GM12878 (cell line): ENCODE measurements at regions of chr21 and their contacts with region 1.

Region 1: GRCh38 chr21:14864211-14865021 is 200.4 kb downstream of the NRIP1 start:
- DNase-seq: no peak
- ATAC-seq: peak; percentile 95
- H3K4me3 ChIP-seq: no peak overlapping the region
- H3K27ac ChIP-seq: peak overlapping the region; percentile 40
- H3K4me1 ChIP-seq: peaks cover 13% of the 10 kb centered on the region
- H3K27me3 ChIP-seq: no peaks in the 10 kb centered on the region
- CTCF ChIP-seq: peak; percentile 87 to 89 (median 87)
- EP300 ChIP-seq: peak in 1 of 2 experiments; percentile 44; a peak in 1 of 4 replicates
- POLR2A ChIP-seq: no peak
- RAD21 ChIP-seq: peak; percentile 95

Region 2: DNA sequence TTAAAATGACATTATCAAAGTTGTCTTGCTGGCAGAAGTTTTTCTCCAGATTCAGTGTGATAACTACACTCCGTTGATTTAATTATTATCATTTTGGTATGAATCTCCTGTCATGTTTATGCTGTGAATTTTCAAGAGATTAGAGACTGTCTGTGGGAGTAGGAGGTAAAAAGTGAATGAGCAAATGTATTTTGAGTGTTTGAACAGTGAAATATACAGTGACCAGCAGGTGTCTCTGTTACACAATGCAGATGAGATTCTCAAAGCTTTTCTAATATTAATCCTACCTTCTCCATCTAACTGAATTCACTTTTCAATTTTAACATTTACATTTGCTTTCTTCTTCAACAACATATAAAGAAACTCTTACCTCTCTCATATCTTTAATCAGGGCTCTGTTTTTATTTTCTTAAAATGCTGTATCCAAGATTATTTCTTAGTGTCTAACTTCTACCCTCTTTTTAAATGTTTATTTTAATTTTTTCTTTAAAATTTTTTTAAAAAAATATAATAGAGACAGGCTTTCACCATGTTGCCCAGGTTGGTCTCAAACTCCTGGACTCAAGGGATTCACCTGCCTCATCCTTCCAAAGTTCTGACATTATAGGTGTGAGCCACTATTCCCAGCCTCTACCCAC is 460.6 kb before region 1 on chr21:
- CTCF ChIA-PET with region 1: interaction called, 4 read pairs
- POLR2A ChIA-PET with region 1: no interaction called
- RAD21 ChIA-PET with region 1: interaction called, 4 read pairs
- SMC1A ChIA-PET with region 1: interaction called, 6 read pairs
- in situ Hi-C with region 1: no loop called
- intact Hi-C with region 1: loop called (anchors 5 kb)
- DNase-seq: peak; percentile 9
- ATAC-seq: peak; percentile 78
- H3K4me3 ChIP-seq: no peak overlapping the region
- H3K27ac ChIP-seq: no peak overlapping the region
- H3K4me1 ChIP-seq: no peaks in the 10 kb centered on the region
- H3K27me3 ChIP-seq: no peaks in the 10 kb centered on the region
- CTCF ChIP-seq: peak; percentile 42 to 72 (median 60); a peak in 5 of 6 replicates
- EP300 ChIP-seq: no peak
- POLR2A ChIP-seq: no peak
- RAD21 ChIP-seq: peak; percentile 83

Region 3: DNA sequence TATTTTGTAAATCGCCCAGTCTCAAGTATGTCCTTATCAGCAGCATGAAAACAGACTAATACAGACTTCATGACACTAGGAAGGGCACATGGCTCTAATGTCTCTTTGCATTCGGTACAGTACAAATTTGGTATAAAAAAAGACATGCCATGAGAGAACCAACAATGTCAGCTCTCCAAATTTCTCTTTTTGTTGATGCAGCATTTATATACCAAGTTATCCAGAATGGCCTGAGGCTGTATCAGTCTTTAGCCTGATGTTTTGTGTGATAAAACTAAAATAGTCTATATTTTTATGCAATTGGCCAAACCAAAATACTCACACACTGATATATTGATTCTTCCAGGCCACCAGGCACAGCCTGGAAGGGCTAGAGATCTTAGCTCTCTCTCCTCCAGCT is 194.0 kb before region 1 on chr21:
- CTCF ChIA-PET with region 1: no interaction called
- POLR2A ChIA-PET with region 1: no interaction called
- RAD21 ChIA-PET with region 1: no interaction called
- SMC1A ChIA-PET with region 1: no interaction called
- in situ Hi-C with region 1: no loop called
- intact Hi-C with region 1: no loop called
- DNase-seq: no peak
- ATAC-seq: no peak
- H3K4me3 ChIP-seq: no peak overlapping the region
- H3K27ac ChIP-seq: no peak overlapping the region
- H3K4me1 ChIP-seq: peaks cover 2% of the 10 kb centered on the region
- H3K27me3 ChIP-seq: no peaks in the 10 kb centered on the region
- CTCF ChIP-seq: no peak
- EP300 ChIP-seq: no peak
- POLR2A ChIP-seq: no peak
- RAD21 ChIP-seq: no peak

Region 4: DNA sequence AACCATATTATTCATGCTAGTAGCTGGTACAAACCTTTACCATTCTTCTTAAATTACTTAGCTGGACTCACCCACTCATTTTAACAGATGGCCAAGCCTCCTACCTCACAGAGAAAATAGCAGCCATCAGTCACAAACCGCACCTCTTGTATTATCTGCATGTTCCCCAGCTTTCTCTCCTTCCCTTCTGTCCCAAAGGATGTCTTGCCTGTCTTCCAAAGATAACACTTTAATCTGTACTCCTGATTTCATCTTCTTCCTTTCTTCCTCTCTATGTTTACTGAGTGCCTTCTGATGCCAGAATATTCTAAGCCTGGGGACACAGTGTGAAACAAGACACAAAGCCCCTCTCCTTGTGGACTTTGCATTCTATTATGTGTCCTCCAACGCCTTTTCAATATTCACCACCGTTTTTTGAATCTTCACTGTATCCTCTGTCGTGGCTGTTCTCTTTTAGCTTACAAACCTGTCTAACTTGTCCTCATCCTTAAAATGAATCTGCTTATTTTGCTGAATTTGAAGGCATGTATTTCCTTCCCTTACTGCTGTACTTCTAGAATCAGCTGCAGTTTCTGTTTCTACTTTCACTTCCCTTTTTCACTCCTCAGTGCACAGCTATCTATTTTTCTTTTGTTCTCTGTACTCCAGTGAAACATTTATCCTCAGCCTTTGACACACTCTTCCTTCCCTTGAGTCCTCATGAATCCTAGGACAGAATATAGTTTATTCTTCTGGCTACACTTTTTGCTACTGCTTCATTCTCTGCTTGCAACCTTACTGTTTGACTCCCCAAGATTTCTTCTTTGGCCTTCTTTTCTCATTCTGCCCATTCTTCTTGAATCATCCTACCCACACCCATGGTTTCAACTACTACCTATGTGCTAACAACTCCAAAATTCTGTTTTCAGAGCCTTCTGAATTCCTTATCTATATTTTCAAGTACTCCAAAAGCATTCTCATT is 101.4 kb before region 1 on chr21:
- CTCF ChIA-PET with region 1: interaction called, 8 read pairs
- POLR2A ChIA-PET with region 1: no interaction called
- RAD21 ChIA-PET with region 1: interaction called, 5 read pairs
- SMC1A ChIA-PET with region 1: interaction called, 5 read pairs
- in situ Hi-C with region 1: no loop called
- intact Hi-C with region 1: loop called (anchors 5 kb)
- DNase-seq: peak; percentile 82
- ATAC-seq: peak; percentile 97
- H3K4me3 ChIP-seq: peak overlapping the region; percentile 59
- H3K27ac ChIP-seq: peak overlapping the region; percentile 87
- H3K4me1 ChIP-seq: peaks cover 10% of the 10 kb centered on the region
- H3K27me3 ChIP-seq: no peaks in the 10 kb centered on the region
- CTCF ChIP-seq: no peak
- EP300 ChIP-seq: peak; percentile 89 to 98
- POLR2A ChIP-seq: no peak
- RAD21 ChIP-seq: 0 out of 2 replicates have a peak, but pooled peaks have one; percentile 24

Region 5: DNA sequence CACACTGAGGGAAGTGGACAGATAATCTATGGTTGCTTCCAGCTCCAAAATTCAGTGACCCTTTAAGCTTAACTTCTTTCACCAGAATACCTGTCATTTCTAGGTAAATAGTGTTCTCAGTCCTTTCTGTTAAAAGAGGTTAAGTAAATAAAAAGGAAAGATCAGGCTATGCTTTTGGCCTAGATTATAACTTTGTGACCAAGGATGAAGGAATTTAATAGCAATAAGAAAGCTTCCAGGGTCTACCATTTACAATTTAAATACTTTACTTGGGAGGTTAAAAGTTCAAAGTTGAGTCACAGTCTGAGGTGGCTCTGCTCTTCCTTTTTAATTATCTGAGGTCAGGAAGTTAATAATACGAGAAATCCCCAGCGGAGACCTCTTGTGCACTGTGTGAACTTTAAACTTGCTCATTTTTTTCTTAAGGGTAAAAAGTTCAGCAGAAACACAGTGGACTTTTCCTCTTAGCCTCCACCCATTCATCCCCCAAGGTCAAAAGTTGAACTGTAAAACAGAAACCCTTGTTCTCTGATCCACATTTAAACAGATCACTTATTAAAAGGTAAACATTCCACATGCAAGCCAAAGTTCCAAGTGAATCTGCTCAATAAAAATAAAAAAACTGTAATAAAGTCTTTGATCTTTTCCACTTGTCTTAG is 13.3 kb after region 1 on chr21:
- CTCF ChIA-PET with region 1: interaction called, 15 read pairs
- POLR2A ChIA-PET with region 1: no interaction called
- RAD21 ChIA-PET with region 1: interaction called, 13 read pairs
- SMC1A ChIA-PET with region 1: interaction called, 13 read pairs
- in situ Hi-C with region 1: no loop called
- intact Hi-C with region 1: no loop called
- DNase-seq: no peak
- ATAC-seq: peak; percentile 61
- H3K4me3 ChIP-seq: 0 out of 2 replicates have a peak overlapping the region, but pooled peaks have one; percentile 31
- H3K27ac ChIP-seq: no peak overlapping the region
- H3K4me1 ChIP-seq: peaks cover 32% of the 10 kb centered on the region
- H3K27me3 ChIP-seq: no peaks in the 10 kb centered on the region
- CTCF ChIP-seq: no peak
- EP300 ChIP-seq: peak; percentile 67 to 80; a peak in 2 of 4 replicates
- POLR2A ChIP-seq: no peak
- RAD21 ChIP-seq: 0 out of 2 replicates have a peak, but pooled peaks have one; percentile 5

Region 6: DNA sequence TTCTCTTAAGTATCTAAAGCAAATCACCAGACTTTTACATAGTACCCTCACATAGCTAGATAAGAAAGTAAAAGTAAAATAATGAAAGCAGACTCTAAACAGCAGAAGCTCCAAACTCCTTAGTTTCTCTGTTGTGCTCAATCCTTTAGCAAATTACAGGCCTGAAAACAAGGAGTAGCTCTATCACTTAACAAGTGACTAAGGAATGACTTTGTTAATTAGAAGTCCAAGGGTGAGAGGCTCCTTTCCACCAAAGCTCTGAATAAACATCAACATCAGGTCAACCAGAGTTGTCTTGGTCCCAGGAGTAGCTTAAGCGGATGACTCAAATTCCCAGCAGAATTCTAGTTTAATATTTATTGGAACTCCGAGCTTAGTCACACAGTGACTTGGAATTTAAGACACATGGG is 194.4 kb after region 1 on chr21:
- CTCF ChIA-PET with region 1: interaction called, 13 read pairs
- POLR2A ChIA-PET with region 1: interaction called, 3 read pairs
- RAD21 ChIA-PET with region 1: interaction called, 14 read pairs
- SMC1A ChIA-PET with region 1: interaction called, 10 read pairs
- in situ Hi-C with region 1: no loop called
- intact Hi-C with region 1: loop called (anchors 2 kb)
- DNase-seq: no peak
- ATAC-seq: peak; percentile 51
- H3K4me3 ChIP-seq: peak overlapping the region; percentile 52
- H3K27ac ChIP-seq: peak overlapping the region; percentile 80
- H3K4me1 ChIP-seq: peaks cover 4% of the 10 kb centered on the region
- H3K27me3 ChIP-seq: no peaks in the 10 kb centered on the region
- CTCF ChIP-seq: no peak
- EP300 ChIP-seq: no peak
- POLR2A ChIP-seq: no peak
- RAD21 ChIP-seq: no peak

Region 7: GRCh38 chr21:15729674-15730483 is 865.5 kb after region 1 on chr21 and contains the start of gene USP25:
- CTCF ChIA-PET with region 1: no interaction called
- POLR2A ChIA-PET with region 1: no interaction called
- RAD21 ChIA-PET with region 1: no interaction called
- SMC1A ChIA-PET with region 1: no interaction called
- in situ Hi-C with region 1: loop called (anchors 25 kb)
- intact Hi-C with region 1: no loop called
- DNase-seq: peak; percentile 19
- ATAC-seq: peak; percentile 84
- H3K4me3 ChIP-seq: peak within 1 kb of the TSS; percentile 89
- H3K27ac ChIP-seq: peak within 1 kb of the TSS; percentile 62
- H3K4me1 ChIP-seq: peaks cover 6% of the 10 kb centered on the region; the same call in 1 of the 2 replicates
- H3K27me3 ChIP-seq: peaks cover 0 to 2% of the 10 kb centered on the region in 2 experiments; a peak in 1 of 4 replicates
- CTCF ChIP-seq: no peak; a peak in 1 of 6 replicates
- EP300 ChIP-seq: no peak
- POLR2A ChIP-seq: peak; percentile 85
- RAD21 ChIP-seq: 0 out of 2 replicates have a peak, but pooled peaks have one; percentile 15
- polyA plus RNA-seq, gene USP25: 6.2 to 7.4 TPM